Heart right ventricle (tissue), 16 donors: ENCODE measurements at regions of chr20 and their contacts with region 1.

Region 1: DNA sequence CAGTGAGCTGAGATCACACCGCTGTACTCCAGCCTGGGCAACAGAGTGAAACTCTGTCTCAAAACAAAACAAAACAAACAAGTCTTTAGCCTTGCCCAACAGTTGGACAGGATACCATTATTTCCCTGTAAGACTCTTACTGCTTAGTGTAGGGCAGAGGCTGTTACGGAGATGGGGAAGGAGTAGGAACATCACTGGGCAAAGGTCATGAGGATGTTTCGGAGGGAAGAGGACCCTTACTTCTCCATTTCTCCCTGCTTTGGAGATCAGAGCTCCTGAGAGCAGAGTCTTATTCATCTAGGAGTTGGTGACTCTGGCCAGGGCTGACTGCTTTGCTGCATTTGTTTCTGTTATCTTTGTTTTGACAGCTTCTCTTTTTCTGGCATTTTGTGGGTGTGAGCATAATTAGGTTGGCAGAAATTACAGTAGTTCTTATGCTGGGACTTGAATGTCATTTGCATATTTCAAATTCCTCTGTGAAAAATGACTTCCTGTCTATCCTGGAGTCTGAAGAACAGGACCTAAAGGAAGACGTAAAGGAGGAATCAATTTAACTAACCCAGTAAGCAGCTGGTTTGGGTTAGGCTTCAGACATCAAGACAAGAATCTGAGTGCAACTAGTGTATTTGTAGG is 89.0 kb downstream of the CDS2 start:
- DNase-seq: no peak
- ATAC-seq: no peak
- H3K4me3 ChIP-seq: no peak overlapping the region
- H3K27ac ChIP-seq: peak overlapping the region in 2 of 10 donors; percentile 15 to 66
- H3K4me1 ChIP-seq: peaks cover 0 to 29% (median 13%) of the 10 kb centered on the region in 9 donors
- H3K27me3 ChIP-seq: no peaks in the 10 kb centered on the region
- CTCF ChIP-seq: no peak

Region 2: GRCh38 chr20:4750381-4750780 is 465.4 kb before region 1 on chr20:
- intact Hi-C with region 1: loop called in 1 of 10 experiments (anchors 10 kb)
- DNase-seq: no peak
- ATAC-seq: no peak
- H3K4me3 ChIP-seq: no peak overlapping the region
- H3K27ac ChIP-seq: no peak overlapping the region
- H3K4me1 ChIP-seq: no peaks in the 10 kb centered on the region
- H3K27me3 ChIP-seq: peaks cover 0 to 12% (median 0%) of the 10 kb centered on the region in 7 donors
- CTCF ChIP-seq: no peak